Activated CD4-positive, alpha-beta T cell treated with anti-CD3 and anti-CD28 coated beads for 36 hours (primary cell): ENCODE measurements at regions of chr15 and their contacts with region 1.

Region 1: DNA sequence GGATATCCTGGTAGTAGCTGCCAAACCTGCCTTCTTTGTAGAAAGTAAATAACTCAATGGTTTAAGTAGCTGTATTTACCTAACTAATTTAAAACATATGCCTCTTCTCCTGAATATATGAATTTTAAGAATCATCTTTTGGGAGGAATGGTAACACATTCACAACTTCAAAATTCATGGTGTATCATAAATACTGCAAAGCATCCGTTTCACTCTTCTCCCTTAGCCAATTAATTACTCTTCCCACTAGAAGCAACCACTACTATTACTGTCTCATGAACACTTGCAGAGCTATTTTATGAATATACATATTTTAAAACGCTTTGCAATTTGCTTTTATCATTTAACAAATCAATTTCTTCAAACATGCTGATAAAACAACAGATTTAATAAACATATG is 59.0 kb upstream of the USP50 start:
- DNase-seq: no peak
- ATAC-seq: no peak
- H3K4me3 Mint-ChIP-seq: no peak overlapping the region
- H3K27ac Mint-ChIP-seq: no peak overlapping the region
- H3K4me1 Mint-ChIP-seq: no peaks in the 10 kb centered on the region
- H3K27me3 Mint-ChIP-seq: no peaks in the 10 kb centered on the region

Region 2: GRCh38 chr15:50590288-50590687 is 15.2 kb before region 1 on chr15:
- CTCF ChIA-PET with region 1: interaction called, 22 read pairs
- POLR2A ChIA-PET with region 1: interaction called, 3 read pairs
- intact Hi-C with region 1: no loop called
- DNase-seq: no peak
- ATAC-seq: no peak
- H3K4me3 Mint-ChIP-seq: no peak overlapping the region
- H3K27ac Mint-ChIP-seq: no peak overlapping the region
- H3K4me1 Mint-ChIP-seq: no peaks in the 10 kb centered on the region
- H3K27me3 Mint-ChIP-seq: no peaks in the 10 kb centered on the region